Sigmoid colon (tissue), 7 donors: ENCODE measurements at regions of chr19 and their contacts with region 1.

Region 1: GRCh38 chr19:56350416-56351045 is 35.9 kb upstream of the ZSCAN5A start:
- DNase-seq: no peak
- H3K4me3 ChIP-seq: no peak overlapping the region
- H3K27ac ChIP-seq: no peak overlapping the region
- H3K4me1 ChIP-seq: no peaks in the 10 kb centered on the region
- H3K27me3 ChIP-seq: no peaks in the 10 kb centered on the region
- CTCF ChIP-seq: peak; percentile 64 to 82 (median 75)
- EP300 ChIP-seq: no peak
- POLR2A ChIP-seq: no peak

Region 2: GRCh38 chr19:56170261-56170660 is 180.3 kb before region 1 on chr19:
- intact Hi-C with region 1: loop called (anchors 10 kb)
- DNase-seq: no peak
- H3K4me3 ChIP-seq: no peak overlapping the region
- H3K27ac ChIP-seq: no peak overlapping the region
- H3K4me1 ChIP-seq: no peaks in the 10 kb centered on the region
- H3K27me3 ChIP-seq: peaks cover 0 to 22% (median under 1%) of the 10 kb centered on the region in 3 donors
- CTCF ChIP-seq: no peak
- EP300 ChIP-seq: no peak
- POLR2A ChIP-seq: no peak

Region 3: DNA sequence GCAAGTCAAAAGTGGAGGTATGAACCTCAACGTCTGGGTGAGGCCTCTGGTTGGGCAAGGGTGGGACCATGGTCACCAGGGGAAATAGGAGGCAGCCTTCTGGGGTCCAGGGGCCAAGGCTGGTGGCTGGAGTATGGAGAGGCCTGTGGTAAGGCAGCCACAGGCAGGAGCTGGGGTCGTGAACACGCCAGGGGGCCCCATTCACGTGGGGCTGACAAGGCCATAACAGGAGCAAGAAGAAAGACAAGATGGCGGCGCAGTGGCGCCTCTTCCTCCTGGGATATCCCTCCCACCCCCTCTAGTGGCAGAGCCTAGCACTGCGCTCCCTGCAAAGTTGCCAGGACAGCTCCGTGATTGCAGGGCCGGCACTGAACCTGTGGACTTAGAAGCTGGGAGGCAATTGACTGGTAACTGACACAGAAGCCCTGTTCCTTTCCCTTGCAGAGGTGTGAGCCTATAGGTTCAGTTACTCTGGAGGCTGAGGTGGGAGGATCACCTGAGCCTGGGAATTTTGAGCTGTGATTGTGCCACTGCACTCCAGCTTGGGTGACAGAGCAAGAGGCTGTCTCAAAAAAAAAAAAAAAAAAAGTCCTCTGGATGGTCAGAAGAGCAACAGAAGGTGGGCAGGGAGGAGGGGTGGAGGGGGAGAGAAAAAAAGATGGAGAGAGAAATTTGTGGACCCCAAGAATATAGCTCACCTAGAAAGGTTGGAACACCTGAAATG is 97.7 kb before region 1 on chr19:
- intact Hi-C with region 1: loop called (anchors 2 kb)
- DNase-seq: peak; percentile 73
- H3K4me3 ChIP-seq: no peak overlapping the region
- H3K27ac ChIP-seq: no peak overlapping the region
- H3K4me1 ChIP-seq: peaks cover 0 to 3% (median 0%) of the 10 kb centered on the region in 4 donors
- H3K27me3 ChIP-seq: peaks cover 0 to 3% (median 0%) of the 10 kb centered on the region in 3 donors
- CTCF ChIP-seq: peak in 3 of 4 experiments; percentile 67 to 74 (median 68)
- EP300 ChIP-seq: no peak
- POLR2A ChIP-seq: no peak

Region 4: DNA sequence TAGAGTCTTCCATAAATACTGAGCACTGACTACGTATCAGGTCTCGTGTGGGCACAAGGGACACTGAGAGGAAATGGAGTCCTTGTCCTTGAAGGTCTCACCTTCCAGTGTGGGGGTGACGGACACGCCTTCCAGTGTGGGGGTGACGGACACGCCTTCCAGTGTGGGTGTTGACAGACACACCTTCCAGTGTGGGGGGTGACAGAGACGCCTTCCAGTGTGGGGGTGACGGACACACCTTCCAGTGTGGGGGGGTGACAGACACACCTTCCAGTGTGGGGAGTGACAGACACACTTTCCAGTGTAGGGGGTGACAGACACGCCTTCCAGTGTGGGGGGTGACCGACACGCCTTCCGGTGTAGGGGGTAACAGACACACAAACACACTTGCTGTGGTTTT is 92.3 kb before region 1 on chr19:
- intact Hi-C with region 1: loop called (anchors 2 kb)
- DNase-seq: no peak
- H3K4me3 ChIP-seq: no peak overlapping the region
- H3K27ac ChIP-seq: no peak overlapping the region
- H3K4me1 ChIP-seq: no peaks in the 10 kb centered on the region
- H3K27me3 ChIP-seq: peaks cover 0 to 6% (median 0%) of the 10 kb centered on the region in 3 donors
- CTCF ChIP-seq: no peak
- EP300 ChIP-seq: no peak
- POLR2A ChIP-seq: no peak